BJ (cell line): ENCODE measurements at regions of chr7 and their contacts with region 1.

Region 1: GRCh38 chr7:128155100-128155740 is 85.9 kb upstream of the LEP start:
- DNase-seq: no peak
- H3K4me3 ChIP-seq: no peak overlapping the region
- H3K27me3 ChIP-seq: peaks cover 32% of the 10 kb centered on the region
- CTCF ChIP-seq: no peak

Region 2: DNA sequence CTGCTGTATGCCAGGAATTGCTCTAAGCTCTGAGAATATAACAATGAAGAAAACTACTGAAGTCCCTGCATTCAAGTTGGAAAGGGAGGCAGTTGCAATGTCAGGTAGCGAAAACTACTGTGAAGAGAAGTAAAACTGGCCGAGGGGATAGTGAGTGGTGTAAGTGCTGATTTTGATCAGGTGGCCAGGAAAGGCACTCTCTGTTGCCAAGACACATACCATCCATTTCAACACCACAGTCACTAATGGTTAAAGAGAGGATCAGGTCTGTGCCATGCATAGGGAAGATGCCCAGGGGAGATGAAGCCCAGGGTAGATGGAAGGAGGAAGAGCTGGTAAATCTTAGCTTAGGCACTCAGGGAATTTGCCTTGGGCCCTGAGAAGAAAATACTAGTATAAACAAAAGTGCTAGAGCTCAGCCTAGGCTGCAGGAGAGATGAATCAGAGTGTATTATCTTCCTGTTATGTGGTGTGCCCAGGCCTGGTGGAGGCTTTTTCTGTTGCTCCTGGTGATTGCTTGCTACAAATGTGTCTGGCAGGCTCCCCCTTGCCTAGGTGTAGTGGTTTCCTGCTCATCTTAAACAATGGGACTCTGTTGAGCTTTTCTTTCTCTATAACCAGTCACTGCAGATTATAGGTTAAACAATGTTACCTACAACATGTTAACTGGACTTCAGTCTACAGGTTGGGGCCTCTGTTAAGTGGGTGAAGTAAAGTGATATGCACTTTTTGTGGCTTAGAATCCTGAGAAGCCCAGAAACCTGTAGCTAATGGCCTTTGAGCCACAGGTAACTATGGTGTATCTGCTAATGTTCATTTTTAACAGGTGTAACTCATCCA is 249.5 kb before region 1 on chr7:
- CTCF ChIA-PET with region 1: no interaction called
- POLR2A ChIA-PET with region 1: no interaction called
- DNase-seq: no peak
- H3K4me3 ChIP-seq: no peak overlapping the region
- H3K27me3 ChIP-seq: no peaks in the 10 kb centered on the region
- CTCF ChIP-seq: no peak

Region 3: GRCh38 chr7:128122576-128123290 is 32.5 kb before region 1 on chr7:
- CTCF ChIA-PET with region 1: no interaction called
- POLR2A ChIA-PET with region 1: no interaction called
- DNase-seq: no peak
- H3K4me3 ChIP-seq: no peak overlapping the region
- H3K27me3 ChIP-seq: peaks cover 19% of the 10 kb centered on the region
- CTCF ChIP-seq: no peak

Region 4: GRCh38 chr7:128231021-128231420 is 75.8 kb after region 1 on chr7:
- CTCF ChIA-PET with region 1: no interaction called
- POLR2A ChIA-PET with region 1: interaction called, 10 read pairs
- DNase-seq: no peak
- H3K4me3 ChIP-seq: no peak overlapping the region
- H3K27me3 ChIP-seq: no peaks in the 10 kb centered on the region
- CTCF ChIP-seq: no peak